AG04450 (cell line): ENCODE measurements at regions of chr3 and their contacts with region 1.

Region 1: DNA sequence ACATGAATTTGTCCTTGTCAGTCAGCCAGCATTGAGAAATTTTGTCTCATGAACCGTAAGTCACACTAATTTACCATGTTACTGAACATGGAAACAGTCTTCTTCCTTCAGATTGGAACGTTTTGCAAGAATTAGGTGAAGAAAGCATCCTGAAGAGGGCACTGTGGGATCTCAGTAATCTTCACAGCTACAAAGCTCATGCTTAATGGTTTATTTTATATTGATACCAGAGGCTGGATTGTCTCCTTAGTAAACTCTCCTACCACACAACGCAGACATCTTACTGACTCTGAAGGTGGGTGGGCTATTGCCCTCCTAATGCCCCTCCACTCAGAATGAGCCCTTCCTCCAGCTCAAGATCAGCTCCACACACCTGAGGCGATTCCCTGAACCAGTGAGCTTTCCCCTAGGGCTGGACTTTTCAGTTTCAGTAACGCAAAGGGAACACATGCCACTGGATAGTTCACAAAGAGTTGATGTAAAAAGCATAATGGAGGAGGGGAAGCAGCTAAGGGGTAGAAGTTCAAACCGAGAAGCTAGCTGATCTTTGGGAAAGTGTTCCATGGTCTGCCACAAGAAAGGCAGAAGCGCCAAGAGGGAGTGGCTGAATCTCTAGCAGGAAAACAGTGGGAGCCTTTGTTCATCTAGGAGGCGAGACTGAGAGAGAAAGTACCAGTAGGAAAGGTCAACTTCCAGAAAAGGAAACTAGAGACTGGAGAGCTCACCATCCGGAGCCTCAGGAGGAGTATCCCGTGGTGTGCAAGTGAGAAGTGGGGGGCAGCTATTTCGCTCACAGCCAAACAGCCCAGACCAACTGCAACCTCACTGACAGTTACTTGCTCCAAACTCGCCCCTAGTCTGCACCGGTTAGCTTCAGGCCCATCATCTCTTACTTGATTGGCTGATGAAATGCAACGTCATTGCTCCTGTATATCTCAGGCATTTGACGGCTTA is at the start of gene SLC9C1:
- DNase-seq: peak; percentile 36
- H3K4me3 ChIP-seq: peak within 1 kb of the TSS; percentile 11
- H3K27ac ChIP-seq: no peak within 1 kb of the TSS
- H3K27me3 ChIP-seq: no peaks in the 10 kb centered on the region
- CTCF ChIP-seq: peak; percentile 74
- polyA plus RNA-seq, gene SLC9C1: not detected in 2 replicates

Region 2: GRCh38 chr3:111824351-111824750 is 469.3 kb before region 1 on chr3:
- CTCF ChIA-PET with region 1: no interaction called
- POLR2A ChIA-PET with region 1: no interaction called
- DNase-seq: no peak
- H3K4me3 ChIP-seq: no peak overlapping the region
- H3K27ac ChIP-seq: no peak overlapping the region
- H3K27me3 ChIP-seq: no peaks in the 10 kb centered on the region
- CTCF ChIP-seq: no peak

Region 3: DNA sequence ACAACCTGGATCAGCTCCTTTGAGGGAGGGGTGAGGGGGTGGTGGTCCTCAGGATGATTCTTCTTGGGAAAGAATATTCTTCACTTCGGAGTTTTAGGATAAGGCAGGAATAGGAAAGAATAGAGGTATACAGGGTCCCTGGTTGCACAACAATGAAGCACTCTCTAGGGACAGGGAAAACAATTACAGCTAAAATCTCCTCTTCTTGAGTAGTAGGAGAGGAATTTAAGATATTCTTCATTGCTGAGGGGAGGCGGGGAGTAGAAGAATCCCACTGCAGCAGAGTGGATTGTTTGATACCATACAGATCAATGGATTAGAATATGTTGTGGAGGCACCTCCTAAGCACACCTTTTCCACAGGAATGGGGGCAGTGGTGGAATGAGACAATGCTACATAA is 20.1 kb before region 1 on chr3:
- CTCF ChIA-PET with region 1: interaction called, 14 read pairs
- POLR2A ChIA-PET with region 1: no interaction called
- DNase-seq: no peak
- H3K4me3 ChIP-seq: no peak overlapping the region
- H3K27ac ChIP-seq: no peak overlapping the region
- H3K27me3 ChIP-seq: no peaks in the 10 kb centered on the region
- CTCF ChIP-seq: no peak

Region 4: DNA sequence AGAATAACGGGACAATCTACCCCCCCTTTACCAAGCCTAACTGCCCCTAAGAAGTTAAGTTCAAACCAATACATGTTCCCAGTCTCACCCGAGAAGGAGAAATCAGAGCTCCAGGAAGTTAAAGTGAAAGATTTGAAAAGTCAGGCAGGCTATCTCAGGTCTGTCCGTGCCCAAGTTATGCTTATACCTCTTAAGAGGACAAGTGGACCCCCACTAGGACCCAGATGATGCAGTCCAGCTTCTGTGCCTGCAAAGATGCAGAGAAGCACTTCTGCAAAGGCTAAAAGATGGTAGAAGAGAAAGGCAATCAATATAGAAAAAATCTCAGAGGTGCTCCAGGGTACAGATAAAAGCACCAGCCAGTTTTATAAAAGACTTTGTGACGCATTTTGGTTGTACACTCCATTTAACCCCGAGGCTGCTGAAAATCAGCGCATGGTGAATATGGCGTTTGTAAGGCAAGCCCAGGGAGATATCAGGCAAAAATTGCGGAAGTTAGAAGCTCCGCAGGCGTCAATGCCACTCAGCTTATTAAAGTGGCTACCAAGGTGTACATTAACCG is 10.2 kb after region 1 on chr3:
- CTCF ChIA-PET with region 1: interaction called, 62 read pairs
- POLR2A ChIA-PET with region 1: no interaction called
- DNase-seq: no peak
- H3K4me3 ChIP-seq: peak overlapping the region; percentile 55
- H3K27ac ChIP-seq: peak overlapping the region; percentile 39
- H3K27me3 ChIP-seq: no peaks in the 10 kb centered on the region
- CTCF ChIP-seq: no peak

Region 5: GRCh38 chr3:112327371-112327951 is 33.8 kb after region 1 on chr3:
- CTCF ChIA-PET with region 1: interaction called, 50 read pairs
- POLR2A ChIA-PET with region 1: no interaction called
- DNase-seq: peak; percentile 21
- H3K4me3 ChIP-seq: no peak overlapping the region
- H3K27ac ChIP-seq: no peak overlapping the region
- H3K27me3 ChIP-seq: peaks cover 5% of the 10 kb centered on the region
- CTCF ChIP-seq: peak; percentile 82

Region 6: DNA sequence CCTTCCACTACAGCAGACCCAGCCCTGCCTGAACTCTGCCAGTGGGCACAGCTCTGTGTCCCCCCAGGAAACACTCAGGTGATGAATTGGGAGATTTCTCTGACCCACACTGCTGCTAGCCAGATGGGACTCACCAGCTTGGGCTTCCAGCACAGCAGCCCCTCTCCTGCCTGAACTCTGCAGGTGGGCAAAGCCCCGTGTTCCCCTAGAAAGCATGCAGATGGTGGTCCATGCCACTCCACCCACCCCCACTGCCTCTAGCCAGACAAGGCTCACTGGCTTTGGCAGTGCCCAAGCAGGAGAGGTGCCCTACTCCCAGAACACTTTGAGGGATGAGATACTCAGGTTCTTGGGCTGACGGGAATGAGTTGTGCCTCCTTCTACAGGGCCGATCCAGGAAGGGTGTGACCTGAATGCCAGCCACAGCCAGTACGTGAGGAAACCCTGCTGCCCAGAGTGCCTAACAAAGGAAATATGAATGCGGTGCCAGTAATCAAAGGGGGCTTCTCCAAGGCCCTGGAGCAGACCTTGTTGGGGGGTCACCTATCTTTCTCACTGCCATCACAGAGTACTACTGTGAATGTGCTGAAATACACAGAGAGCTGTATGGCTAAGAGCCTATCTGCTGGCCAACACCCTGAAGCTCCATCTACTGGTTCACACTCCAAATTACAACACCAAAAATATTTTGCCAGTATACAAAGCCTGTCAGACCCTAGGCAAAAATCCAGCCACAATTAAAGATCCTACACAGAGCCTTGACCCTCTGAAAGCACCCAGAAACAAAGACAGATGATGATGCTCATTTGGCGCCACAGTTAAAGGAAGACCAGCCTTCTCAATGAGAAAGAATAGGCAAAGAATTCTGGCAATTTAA is 143.7 kb after region 1 on chr3:
- CTCF ChIA-PET with region 1: interaction called, 12 read pairs
- POLR2A ChIA-PET with region 1: no interaction called
- DNase-seq: peak; percentile 8
- H3K4me3 ChIP-seq: no peak overlapping the region
- H3K27ac ChIP-seq: no peak overlapping the region
- H3K27me3 ChIP-seq: no peaks in the 10 kb centered on the region
- CTCF ChIP-seq: peak; percentile 60

Region 7: DNA sequence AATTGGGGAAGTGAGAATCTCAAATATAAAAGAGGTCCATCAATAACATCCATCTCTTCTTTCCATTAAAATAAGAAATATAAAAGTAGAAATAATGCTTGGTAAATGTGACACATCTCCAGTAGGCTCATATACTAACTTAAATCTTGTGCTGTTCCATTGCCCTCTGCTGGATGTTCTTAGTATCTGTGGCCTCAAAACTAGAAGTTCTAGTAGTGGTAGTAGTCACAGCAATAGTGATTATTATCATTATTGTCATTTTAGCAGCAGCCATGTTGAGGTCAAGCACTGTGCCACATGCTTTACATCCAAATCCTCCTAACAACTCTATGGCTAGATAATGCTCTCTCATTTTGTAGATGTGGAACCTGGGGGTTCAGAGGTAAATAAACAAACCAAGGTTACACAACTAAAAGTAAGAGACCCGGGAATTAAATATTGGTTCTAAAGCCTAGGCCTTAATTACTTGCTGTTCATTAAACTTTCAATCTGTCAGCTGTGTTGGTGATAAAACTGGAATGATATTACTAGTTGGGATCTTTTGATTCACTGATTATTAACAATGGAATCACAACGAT is 225.9 kb after region 1 on chr3:
- CTCF ChIA-PET with region 1: interaction called, 67 read pairs
- POLR2A ChIA-PET with region 1: no interaction called
- DNase-seq: peak; percentile 50
- H3K4me3 ChIP-seq: no peak overlapping the region
- H3K27ac ChIP-seq: no peak overlapping the region
- H3K27me3 ChIP-seq: no peaks in the 10 kb centered on the region
- CTCF ChIP-seq: peak; percentile 81

Region 8: DNA sequence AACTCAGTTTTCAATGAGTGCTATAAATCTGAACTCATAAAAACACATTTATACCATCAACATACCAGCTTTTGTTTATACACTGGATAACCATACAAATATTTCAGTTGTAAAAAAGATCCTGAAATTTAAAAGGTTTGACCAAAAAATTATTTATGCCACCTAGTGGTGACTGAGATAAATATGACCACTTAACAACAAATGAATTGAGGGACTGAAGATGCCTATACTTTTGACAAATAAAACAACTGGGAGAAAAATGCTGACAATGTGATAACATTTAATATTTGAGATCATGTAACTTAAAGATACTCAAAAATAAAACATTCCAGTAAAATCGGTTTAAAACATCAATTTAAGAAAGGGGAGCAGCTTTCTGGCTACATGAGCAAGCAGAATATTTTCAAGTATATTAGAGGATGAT is 237.7 kb after region 1 on chr3:
- CTCF ChIA-PET with region 1: interaction called, 57 read pairs
- POLR2A ChIA-PET with region 1: no interaction called
- DNase-seq: peak; percentile 6
- H3K4me3 ChIP-seq: no peak overlapping the region
- H3K27ac ChIP-seq: no peak overlapping the region
- H3K27me3 ChIP-seq: no peaks in the 10 kb centered on the region
- CTCF ChIP-seq: peak; percentile 53